ENCODE measurements at regions of chr19 and their contacts with region 1.

Region 1: GRCh38 chr19:37313335-37313627 is 57.6 kb upstream of the ZNF527 start:
- DNase-seq: no peak
- H3K4me3 ChIP-seq: no peak overlapping the region
- H3K4me3 Mint-ChIP-seq: peak overlapping the region; percentile 68 to 92 (median 84)
- H3K27ac ChIP-seq: no peak overlapping the region
- H3K27ac Mint-ChIP-seq: peak overlapping the region in 6 of 8 donors; percentile 38 to 90 (median 76)
- H3K4me1 ChIP-seq: no peaks in the 10 kb centered on the region
- H3K4me1 Mint-ChIP-seq: peaks cover 22 to 28% (median 27%) of the 10 kb centered on the region in 3 donors
- H3K27me3 ChIP-seq: no peaks in the 10 kb centered on the region
- H3K27me3 Mint-ChIP-seq: peaks cover 0 to 8% of the 10 kb centered on the region in 2 donors

Region 2: DNA sequence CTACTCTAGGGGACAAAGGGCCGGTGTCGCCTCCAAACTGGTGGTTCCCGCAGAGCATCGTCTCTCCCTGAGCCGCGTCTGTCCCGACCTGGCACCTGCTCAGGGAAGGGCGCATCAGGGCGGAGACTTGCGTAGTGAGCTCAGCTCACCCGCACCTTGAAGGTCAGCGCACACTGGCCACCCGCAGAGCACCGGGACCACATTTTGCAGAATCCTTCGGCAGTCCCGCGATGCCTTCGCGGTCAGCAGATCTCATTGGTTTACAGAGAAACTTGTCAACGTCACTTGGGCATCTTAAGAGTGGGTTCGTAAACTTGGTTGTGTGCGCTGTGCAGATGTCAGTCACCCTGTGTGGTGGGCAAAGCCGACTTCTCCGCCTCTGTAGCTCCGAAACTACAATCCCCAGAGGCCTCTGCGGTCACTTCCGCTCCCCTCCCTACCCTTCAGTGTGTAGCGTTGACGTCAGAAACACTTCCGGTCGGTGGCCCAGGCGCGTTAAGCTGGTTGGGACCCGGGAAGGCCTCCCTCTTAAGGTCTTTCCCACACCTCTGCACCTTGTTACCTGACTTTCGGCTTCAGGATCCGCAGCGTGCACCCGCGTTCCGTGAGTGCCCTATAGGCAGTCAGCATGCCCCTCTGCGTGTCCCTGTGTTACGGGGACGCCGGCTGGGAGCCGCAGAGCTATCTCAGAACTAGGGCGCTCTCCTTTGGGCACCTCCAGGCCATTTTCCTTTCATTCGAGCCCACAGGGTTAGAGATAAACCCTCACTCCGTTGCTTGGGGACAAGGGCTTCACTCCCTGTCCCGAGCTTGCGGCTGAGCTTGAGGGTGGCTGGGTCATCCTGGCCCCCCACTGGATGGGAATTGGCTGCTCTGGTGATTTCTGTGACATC is 21.1 kb after region 1 on chr19:
- CTCF ChIA-PET with region 1: no interaction called
- POLR2A ChIA-PET with region 1: interaction called, 11 read pairs
- DNase-seq: peak; percentile 86 to 95 (median 88)
- H3K4me3 ChIP-seq: peak overlapping the region; percentile 71
- H3K4me3 Mint-ChIP-seq: peak overlapping the region; percentile 90 to 98 (median 91)
- H3K27ac ChIP-seq: peak overlapping the region; percentile 74
- H3K27ac Mint-ChIP-seq: peak overlapping the region; percentile 69 to 97 (median 96)
- H3K4me1 ChIP-seq: peaks cover 19% of the 10 kb centered on the region
- H3K4me1 Mint-ChIP-seq: peaks cover 35 to 51% (median 50%) of the 10 kb centered on the region in 3 donors
- H3K27me3 ChIP-seq: no peaks in the 10 kb centered on the region
- H3K27me3 Mint-ChIP-seq: peaks cover 0 to 2% of the 10 kb centered on the region in 2 donors

Region 3: DNA sequence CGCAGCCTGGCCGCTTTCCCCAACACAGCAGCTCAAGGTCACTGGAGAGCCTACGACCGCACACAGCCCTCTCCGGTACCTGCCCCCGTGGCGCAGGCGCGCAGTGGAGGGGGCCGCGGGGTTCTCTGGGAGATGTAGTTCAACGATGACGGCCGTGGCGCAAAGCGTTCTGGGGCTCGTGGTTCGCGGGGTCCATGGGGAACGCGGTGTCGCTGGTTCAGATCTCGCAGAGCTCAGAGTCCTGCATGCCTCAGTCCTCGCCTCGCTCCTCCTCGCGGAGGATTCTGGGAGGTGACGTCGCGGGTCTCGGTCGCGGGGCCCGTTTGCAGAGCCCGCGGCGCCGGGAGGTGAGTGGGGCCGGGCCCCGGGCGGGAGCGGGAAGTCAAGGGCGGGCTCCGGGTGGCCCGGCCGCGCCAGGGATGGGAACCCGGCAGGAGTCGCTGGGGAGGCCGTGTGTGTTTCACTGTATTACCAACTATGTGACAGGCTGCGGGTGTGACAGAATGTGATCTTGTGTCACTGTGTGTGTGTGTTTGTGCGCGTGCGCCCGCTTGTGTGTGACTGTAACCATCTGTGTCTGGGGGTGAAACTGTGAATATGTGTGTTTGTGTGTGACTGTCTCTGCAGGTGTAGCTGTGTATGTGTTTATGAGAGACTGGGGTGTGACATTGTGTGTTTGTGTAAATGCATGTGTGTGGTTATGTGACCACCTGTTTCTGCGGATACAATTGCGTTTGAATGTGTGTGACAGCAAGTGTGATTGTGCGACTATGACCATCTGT is 57.8 kb after region 1 on chr19 and contains the start of gene ZNF527:
- CTCF ChIA-PET with region 1: interaction called, 3 read pairs
- POLR2A ChIA-PET with region 1: interaction called, 10 read pairs
- DNase-seq: peak; percentile 95 to 97 (median 96)
- H3K4me3 ChIP-seq: peak within 1 kb of the TSS; percentile 84
- H3K4me3 Mint-ChIP-seq: peak within 1 kb of the TSS; percentile 91 to 100 (median 99)
- H3K27ac ChIP-seq: peak within 1 kb of the TSS; percentile 86
- H3K27ac Mint-ChIP-seq: peak within 1 kb of the TSS; percentile 84 to 99 (median 98)
- H3K4me1 ChIP-seq: peaks cover 13% of the 10 kb centered on the region
- H3K4me1 Mint-ChIP-seq: peaks cover 15 to 23% (median 19%) of the 10 kb centered on the region in 3 donors
- H3K27me3 ChIP-seq: no peaks in the 10 kb centered on the region
- H3K27me3 Mint-ChIP-seq: no peaks in the 10 kb centered on the region
- total RNA-seq, gene ZNF527: 5.2 to 5.6 TPM